IMR-90 (cell line): ENCODE measurements at regions of chr3 and their contacts with region 1.

Region 1: DNA sequence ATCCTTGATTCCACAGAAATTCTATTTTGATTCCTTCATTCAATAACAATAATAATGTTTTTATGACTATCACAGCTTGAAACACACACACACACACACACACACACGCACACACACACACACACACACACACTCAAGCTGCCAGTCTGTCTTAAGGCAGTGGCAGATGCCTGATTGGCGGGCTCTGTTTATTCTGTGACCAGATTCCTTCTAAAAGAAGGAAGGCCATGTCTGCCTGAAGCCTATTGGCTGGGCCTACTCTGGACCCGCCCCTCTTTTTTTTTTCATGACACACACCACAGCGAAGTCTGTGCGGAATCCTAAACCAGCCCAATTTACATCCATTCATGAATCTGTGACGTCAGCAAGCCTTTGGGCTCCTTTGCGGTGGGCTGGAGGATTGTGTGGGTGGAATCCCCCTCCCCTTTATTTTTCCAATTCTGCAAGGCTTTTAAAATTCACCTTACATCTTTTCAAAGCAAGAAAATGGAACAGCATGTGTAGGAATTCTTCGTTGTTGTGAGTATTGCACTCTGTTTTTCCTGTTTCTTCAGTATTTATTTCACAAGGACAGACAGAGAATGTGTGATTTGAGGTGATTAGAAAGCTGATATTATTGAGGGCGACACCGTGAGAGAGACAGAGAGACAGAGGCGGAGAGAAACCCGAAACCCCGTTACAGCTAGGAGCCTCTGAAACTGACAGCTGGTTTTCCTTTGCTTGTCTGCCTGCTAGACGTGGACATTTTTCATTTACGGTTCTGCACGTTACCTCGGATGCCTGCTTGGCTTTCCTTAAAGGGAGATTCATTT is at the start of gene MAP3K13:
- DNase-seq: peak; percentile 94
- ATAC-seq: peak; percentile 99
- H3K4me3 ChIP-seq: peak within 1 kb of the TSS; percentile 45
- H3K27ac ChIP-seq: no peak within 1 kb of the TSS
- H3K4me1 ChIP-seq: no peaks in the 10 kb centered on the region
- H3K27me3 ChIP-seq: peaks cover 5% of the 10 kb centered on the region
- CTCF ChIP-seq: no peak
- POLR2A ChIP-seq: no peak
- RAD21 ChIP-seq: no peak
- total RNA-seq, gene MAP3K13: 17.6 and 19.2 TPM in 2 replicates

Region 2: DNA sequence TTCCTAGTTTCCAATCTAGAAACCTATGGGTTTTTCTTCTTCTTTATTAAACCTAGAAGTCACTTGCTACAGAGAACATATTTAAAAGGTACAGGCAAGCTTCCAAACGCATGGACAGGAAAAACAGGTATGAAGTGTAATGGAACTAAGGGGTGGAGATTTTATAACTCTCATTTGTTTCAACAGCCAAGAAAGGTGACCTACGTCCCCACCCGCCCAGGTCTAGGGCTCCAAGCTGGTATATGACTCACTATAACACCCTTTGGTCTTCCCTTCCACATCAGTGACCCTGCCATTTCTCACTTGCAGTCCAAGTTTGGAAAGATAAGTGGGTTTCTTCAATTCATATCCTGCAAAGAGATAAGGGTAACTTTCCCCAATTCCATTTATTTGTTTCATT is 195.3 kb after region 1 on chr3:
- CTCF ChIA-PET with region 1: no interaction called
- POLR2A ChIA-PET with region 1: no interaction called
- dilution Hi-C with region 1: no loop called
- in situ Hi-C with region 1: no loop called
- intact Hi-C with region 1: loop called (anchors 5 kb)
- DNase-seq: no peak
- ATAC-seq: peak; percentile 22; the same call in 1 of the 2 replicates
- H3K4me3 ChIP-seq: no peak overlapping the region
- H3K27ac ChIP-seq: no peak overlapping the region
- H3K4me1 ChIP-seq: peaks cover 2% of the 10 kb centered on the region; the same call in 1 of the 2 replicates
- H3K27me3 ChIP-seq: peaks cover 12% of the 10 kb centered on the region
- CTCF ChIP-seq: no peak
- POLR2A ChIP-seq: no peak
- RAD21 ChIP-seq: no peak